ENCODE measurements at regions of chr10 and their contacts with region 1.

Region 1: GRCh38 chr10:516766-517165 is 172.7 kb downstream of the DIP2C start:
- DNase-seq: no peak
- H3K4me3 ChIP-seq: no peak overlapping the region
- H3K4me3 Mint-ChIP-seq: no peak overlapping the region
- H3K27ac ChIP-seq: no peak overlapping the region
- H3K27ac Mint-ChIP-seq: no peak overlapping the region
- H3K4me1 ChIP-seq: no peaks in the 10 kb centered on the region
- H3K4me1 Mint-ChIP-seq: no peaks in the 10 kb centered on the region
- H3K27me3 ChIP-seq: no peaks in the 10 kb centered on the region
- H3K27me3 Mint-ChIP-seq: peaks cover 8 to 14% (median 10%) of the 10 kb centered on the region in 3 donors
- CTCF ChIP-seq: no peak

Region 2: DNA sequence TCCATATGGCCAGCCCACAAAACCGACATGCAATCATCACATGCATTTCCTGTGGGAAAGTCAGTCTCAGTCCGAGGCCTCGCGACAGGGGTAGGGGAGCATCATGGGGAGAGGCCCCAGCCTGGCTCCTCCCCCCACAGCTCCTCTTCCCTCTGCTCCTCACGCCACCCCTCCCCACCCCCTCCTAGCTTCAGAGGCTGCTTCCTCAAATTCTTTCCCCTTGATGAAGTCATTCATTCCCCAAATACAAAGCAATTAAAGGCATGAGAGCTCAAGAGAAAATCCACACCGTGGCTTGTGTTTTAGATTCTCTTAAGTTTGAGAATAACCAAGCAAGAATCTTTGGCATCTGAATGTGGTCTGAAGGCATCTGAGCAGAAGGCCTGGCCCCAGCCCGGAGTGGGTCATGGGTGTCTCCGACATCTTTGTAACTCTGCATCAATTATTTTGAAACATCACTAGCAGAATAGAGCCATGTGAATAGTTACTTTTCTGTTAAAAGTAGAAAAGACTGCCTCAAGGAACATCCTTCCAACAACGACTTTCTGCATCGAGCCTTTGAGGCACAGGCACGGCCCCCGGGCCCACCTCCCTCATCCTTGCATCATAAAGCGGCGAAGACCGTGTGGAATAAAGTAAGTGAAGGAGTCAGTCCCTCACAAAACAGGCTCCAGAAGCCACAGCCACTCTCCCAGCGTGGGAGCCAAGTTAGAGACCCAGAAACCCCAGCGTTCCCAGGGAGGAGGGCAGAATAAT is 81.8 kb after region 1 on chr10:
- intact Hi-C with region 1: no loop called
- DNase-seq: no peak
- H3K4me3 ChIP-seq: no peak overlapping the region
- H3K4me3 Mint-ChIP-seq: no peak overlapping the region
- H3K27ac ChIP-seq: no peak overlapping the region
- H3K27ac Mint-ChIP-seq: no peak overlapping the region
- H3K4me1 ChIP-seq: no peaks in the 10 kb centered on the region
- H3K4me1 Mint-ChIP-seq: no peaks in the 10 kb centered on the region
- H3K27me3 ChIP-seq: peaks cover 0 to 2% of the 10 kb centered on the region in 2 donors
- H3K27me3 Mint-ChIP-seq: peaks cover 8 to 21% (median 16%) of the 10 kb centered on the region in 3 donors
- CTCF ChIP-seq: no peak

Region 3: DNA sequence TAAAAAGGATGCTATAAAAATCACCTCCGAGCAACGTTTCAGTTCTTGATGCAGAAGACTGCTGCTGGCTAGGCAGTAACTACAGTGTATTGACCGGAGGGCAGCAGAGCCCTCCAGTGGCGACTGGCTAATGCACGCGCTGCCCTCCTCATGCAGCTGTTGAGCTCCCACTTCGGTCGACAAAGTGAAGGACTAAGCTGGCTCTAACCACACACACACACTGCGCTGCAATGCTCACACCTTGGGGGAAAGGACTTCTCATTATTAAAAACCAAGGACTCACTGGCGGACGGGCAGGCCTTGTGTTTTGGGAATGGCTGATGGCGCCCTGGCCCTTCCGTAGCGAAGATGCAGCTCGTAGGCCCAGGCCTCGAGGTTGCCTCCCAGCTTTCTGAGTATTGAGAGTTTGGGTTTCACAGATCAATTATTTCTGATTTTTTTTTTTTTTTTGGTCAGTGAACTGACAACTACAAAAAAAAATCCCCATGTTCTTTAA is 293.6 kb after region 1 on chr10:
- intact Hi-C with region 1: loop called in 1 of 2 experiments (anchors 5 kb)
- DNase-seq: no peak
- H3K4me3 ChIP-seq: no peak overlapping the region
- H3K4me3 Mint-ChIP-seq: no peak overlapping the region
- H3K27ac ChIP-seq: no peak overlapping the region
- H3K27ac Mint-ChIP-seq: no peak overlapping the region
- H3K4me1 ChIP-seq: peaks cover 0 to 2% of the 10 kb centered on the region in 2 donors
- H3K4me1 Mint-ChIP-seq: peaks cover 4% of the 10 kb centered on the region
- H3K27me3 ChIP-seq: no peaks in the 10 kb centered on the region
- H3K27me3 Mint-ChIP-seq: peaks cover 0 to 3% (median 0%) of the 10 kb centered on the region in 3 donors
- CTCF ChIP-seq: no peak